Prostate gland (tissue), 2 donors: ENCODE measurements at regions of chr17 and their contacts with region 1.

Region 1: GRCh38 chr17:67602956-67603355 is 114.8 kb upstream of the NOL11 start:
- DNase-seq: no peak
- H3K4me3 ChIP-seq: no peak overlapping the region
- H3K27ac ChIP-seq: no peak overlapping the region
- H3K4me1 ChIP-seq: no peaks in the 10 kb centered on the region
- H3K27me3 ChIP-seq: no peaks in the 10 kb centered on the region
- CTCF ChIP-seq: peak in 2 of 4 experiments; percentile 36
- POLR2A ChIP-seq: no peak

Region 2: GRCh38 chr17:67475236-67475937 is 127.6 kb before region 1 on chr17:
- intact Hi-C with region 1: loop called (anchors 10 kb)
- DNase-seq: peak; percentile 85
- H3K4me3 ChIP-seq: no peak overlapping the region
- H3K27ac ChIP-seq: peak overlapping the region in 1 of 2 donors; percentile 50
- H3K4me1 ChIP-seq: no peaks in the 10 kb centered on the region
- H3K27me3 ChIP-seq: no peaks in the 10 kb centered on the region
- CTCF ChIP-seq: peak; percentile 27 to 93 (median 86)
- POLR2A ChIP-seq: no peak

Region 3: GRCh38 chr17:67546578-67547527 is 56.1 kb before region 1 on chr17:
- intact Hi-C with region 1: no loop called
- DNase-seq: no peak
- H3K4me3 ChIP-seq: no peak overlapping the region
- H3K27ac ChIP-seq: no peak overlapping the region
- H3K4me1 ChIP-seq: peaks cover 3% of the 10 kb centered on the region
- H3K27me3 ChIP-seq: no peaks in the 10 kb centered on the region
- CTCF ChIP-seq: no peak
- POLR2A ChIP-seq: no peak

Region 4: DNA sequence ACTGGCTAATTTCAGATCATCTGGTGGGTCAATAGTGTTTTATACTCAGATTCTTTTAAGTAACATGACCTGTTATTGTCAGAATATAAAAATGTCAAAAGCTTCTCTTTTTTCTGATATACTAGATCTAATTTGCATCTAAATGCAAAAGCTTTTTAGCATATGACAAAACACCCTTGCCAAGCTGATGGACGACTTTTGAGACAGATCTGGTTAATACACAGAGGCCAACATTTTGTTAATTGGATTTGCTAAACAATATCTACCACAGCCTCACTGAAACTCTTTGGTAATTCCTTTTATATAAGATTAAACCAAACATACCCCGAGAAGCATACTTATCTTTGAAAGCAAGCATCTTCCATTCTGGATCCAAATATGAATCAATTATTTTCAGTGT is 104.5 kb after region 1 on chr17:
- intact Hi-C with region 1: no loop called
- DNase-seq: no peak
- H3K4me3 ChIP-seq: no peak overlapping the region
- H3K27ac ChIP-seq: no peak overlapping the region
- H3K4me1 ChIP-seq: no peaks in the 10 kb centered on the region
- H3K27me3 ChIP-seq: no peaks in the 10 kb centered on the region
- CTCF ChIP-seq: no peak
- POLR2A ChIP-seq: no peak